Posterior cingulate gyrus (tissue), 11 donors: ENCODE measurements at regions of chr19 and their contacts with region 1.

Region 1: GRCh38 chr19:531009-531752 is 379 bp upstream of the CDC34 start:
- DNase-seq: peak in 8 of 10 donors; percentile 54 to 96 (median 60)

Region 2: DNA sequence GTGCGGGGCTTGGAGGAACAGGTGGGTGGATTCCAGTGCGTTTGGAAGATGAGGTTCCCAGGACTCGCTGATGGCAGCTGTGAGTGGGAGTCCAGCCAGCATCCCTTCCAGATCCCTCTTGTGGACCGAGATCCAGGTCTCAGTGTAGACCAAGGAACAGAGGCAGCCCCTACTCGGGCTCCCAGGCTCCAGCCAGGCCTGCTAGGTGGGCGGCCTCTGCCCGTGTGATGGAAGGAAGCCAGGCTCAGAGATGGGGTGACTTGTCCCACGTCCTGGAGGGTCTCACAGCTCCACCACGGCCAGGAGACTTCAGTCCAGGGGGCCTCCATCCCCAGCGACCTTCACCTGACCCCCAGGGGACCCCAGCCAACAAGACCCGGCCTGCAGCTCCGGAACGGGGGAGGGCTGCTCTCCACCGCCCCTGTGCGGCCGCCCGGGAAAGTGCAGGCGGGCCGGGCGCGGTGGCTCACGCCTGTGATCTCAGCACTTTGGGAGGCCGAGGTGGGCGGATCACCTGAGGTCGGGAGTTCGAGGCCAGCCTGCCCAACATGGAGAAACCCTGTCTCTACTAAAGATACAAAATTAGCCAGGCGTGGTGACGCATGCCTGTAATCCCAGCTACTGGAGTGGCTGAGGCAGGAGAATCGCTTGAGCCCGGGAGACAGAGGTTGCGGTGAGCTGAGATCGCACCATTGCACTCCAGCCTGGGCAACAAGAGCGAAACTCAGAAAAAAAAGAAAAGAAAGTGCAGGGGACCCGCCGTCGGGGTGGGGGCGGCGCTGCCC is 35.6 kb before region 1 on chr19:
- intact Hi-C with region 1: no loop called
- DNase-seq: peak in 8 of 10 donors; percentile 52 to 93 (median 66)

Region 3: DNA sequence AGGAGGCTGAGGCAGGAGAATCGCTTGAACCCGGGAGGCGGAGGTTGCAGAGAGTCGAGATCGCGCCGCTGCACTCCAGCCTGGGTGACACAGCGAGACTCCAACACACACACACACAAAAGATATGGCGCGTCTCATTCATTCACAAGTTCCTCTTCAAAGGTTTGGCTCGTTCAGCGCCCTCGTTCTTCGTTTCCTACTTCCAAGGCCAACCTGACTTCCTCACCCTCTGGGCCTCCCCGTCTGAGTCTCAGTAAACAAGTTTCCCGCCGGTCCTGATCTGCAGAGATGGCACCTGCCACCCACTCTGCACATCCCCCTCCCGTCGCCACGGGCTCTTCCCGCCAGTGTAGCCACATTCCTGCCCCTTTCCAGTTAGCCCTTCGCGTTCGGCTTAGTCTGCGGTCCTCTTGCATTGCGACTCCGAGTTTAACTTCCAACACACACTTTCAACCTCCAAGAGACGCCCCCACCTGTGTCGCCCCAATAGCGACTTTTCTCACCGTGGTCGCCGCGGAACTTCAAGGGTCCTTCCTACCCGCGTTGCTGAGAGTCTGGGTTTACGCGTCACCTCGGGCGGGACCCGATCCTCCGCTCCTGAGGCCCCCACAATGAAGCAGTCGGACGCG is 39.9 kb after region 1 on chr19:
- intact Hi-C with region 1: loop called (anchors 2 kb)
- DNase-seq: peak in 1 of 10 donors; percentile 76